IMR-90 (cell line): ENCODE measurements at regions of chr2 and their contacts with region 1.

Region 1: DNA sequence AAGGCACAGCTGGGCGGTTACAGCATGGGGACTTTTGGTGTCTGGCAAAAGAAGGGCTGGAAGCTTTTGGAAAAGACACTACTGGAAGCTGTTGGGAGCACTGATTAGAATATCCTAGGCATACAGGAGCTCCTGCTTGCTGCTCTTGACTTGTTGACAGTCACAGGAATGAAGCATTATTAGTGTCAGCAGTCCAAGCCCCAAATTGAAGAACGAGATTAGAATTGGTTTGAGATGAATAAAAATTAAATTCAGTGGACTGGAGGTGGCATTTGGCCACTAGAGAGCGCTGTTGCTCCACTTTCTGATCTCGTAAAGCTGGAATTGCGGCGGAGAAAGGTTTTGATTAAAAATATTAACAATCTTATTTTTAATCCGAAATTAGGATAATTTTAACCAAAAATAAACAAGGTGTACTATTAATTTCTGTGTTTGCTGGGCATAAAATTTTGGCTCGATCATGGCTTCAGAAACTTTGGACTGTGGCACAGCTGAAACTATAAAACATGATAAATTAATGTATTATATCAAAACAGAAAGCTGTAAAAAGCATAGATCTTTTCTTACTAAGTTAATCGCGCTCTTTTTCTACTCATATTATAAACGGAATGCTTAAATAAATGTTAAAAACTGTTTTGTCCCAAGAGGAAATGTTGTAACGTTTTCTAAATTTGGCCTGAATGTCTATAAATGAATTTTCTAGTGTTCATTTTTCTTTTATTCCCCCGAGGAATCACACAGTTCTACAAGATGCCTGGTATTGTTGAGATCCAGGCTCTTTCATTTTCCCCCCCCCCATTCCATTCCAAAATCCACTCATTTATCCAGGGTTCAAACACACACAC is 2.4 kb upstream of the HOXD8 start:
- DNase-seq: peak; percentile 58
- ATAC-seq: peak; percentile 40; the same call in 1 of the 2 replicates
- H3K4me3 ChIP-seq: no peak overlapping the region
- H3K27ac ChIP-seq: no peak overlapping the region
- H3K4me1 ChIP-seq: no peaks in the 10 kb centered on the region
- H3K27me3 ChIP-seq: peaks cover 88% of the 10 kb centered on the region
- CTCF ChIP-seq: peak; percentile 92
- POLR2A ChIP-seq: no peak
- RAD21 ChIP-seq: peak; percentile 89

Region 2: DNA sequence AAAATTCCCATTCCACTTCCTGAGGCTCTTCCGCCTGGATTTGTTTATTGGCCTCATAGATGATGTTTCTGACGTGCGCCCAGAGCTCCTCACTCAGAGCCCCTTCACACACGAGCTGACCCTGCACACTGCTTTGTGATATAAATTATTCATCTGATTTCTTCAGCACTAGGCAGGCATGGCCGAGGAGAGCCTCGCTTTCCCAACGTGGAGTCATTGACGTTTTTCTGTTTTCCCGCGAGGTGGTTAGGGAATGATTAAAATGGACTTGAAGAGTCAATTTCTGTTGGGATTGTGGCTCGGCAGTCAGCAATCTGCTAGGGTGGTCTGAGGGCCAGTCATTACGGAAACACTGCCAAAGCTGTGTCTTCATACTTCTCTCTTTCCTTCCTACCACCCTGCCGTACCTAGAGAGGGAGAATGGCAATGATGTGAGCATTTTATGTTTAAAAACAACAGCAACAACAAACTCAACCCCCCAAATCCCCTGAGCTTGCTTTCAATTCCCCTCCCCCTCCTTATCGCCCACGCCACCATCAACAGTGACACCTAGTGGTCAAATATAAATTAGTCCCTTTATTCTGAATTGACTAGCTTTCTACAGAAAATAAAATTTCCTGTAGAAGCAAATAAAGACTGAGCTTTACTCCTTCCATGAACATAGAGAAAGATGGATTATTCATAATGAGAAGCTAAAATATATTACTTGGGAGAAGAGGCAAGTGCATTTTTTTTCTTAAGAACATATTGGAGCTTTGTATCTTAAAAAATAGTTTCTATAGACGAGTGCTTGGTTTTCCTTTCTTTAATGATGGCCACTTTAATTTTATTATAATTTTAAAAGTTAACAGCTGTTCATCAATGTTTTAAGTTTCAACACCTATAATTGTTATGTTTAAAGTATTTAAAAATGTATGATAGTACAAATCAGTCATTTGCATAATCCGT is 427.2 kb after region 1 on chr2:
- CTCF ChIA-PET with region 1: interaction called, 19 read pairs
- POLR2A ChIA-PET with region 1: no interaction called
- dilution Hi-C with region 1: no loop called
- in situ Hi-C with region 1: no loop called
- intact Hi-C with region 1: loop called (anchors 1 kb)
- DNase-seq: peak; percentile 52
- ATAC-seq: peak; percentile 75
- H3K4me3 ChIP-seq: peak overlapping the region; percentile 38
- H3K27ac ChIP-seq: no peak overlapping the region
- H3K4me1 ChIP-seq: no peaks in the 10 kb centered on the region
- H3K27me3 ChIP-seq: peaks cover 16% of the 10 kb centered on the region
- CTCF ChIP-seq: peak; percentile 80
- POLR2A ChIP-seq: no peak
- RAD21 ChIP-seq: peak; percentile 62

Region 3: DNA sequence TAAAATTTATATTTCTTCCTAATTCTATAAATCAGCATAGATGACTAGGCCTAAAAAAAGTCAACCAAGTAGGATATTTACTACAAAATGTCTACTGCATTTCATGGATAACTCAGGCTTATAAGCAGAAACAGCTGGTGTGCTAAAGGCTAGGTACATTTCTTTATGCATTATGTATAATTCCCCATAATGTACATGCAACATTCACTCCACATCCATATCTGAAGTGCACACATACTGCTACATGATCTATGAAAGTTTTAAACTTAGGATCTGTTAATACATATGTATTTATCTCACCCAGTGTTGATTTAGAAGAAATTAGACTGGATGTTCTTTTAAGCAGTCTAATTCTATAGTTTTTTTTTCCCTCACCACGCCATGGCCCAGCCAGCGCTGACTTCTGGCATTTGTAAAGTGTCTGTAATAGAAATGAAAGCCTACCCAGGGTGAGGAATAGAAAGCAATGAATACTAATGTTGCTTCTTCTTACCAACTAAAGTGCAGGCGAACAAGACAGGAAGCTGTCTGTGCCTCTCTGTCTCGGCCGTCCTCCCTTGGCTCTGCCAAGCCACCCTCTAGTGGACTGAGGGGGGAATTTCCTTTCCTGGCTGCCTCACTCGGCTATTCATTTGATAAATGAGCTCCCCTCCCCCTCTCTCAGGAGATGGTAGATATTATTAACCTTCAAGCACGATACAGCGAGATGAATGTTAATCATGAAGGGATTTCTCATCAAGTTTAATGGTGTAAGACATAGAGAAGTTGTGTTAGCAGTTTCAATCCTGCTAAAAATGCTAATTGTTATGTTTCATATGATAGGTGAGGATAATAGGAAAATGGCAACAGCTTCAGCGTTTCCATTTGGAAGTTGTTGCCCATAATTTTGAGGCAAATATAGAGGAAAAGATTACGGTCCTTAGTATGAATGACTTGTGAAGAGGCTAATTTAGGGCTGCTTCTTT is 526.6 kb after region 1 on chr2:
- CTCF ChIA-PET with region 1: interaction called, 20 read pairs
- POLR2A ChIA-PET with region 1: no interaction called
- dilution Hi-C with region 1: no loop called
- in situ Hi-C with region 1: no loop called
- intact Hi-C with region 1: loop called (anchors 1 kb)
- DNase-seq: peak; percentile 55
- ATAC-seq: peak; percentile 86
- H3K4me3 ChIP-seq: no peak overlapping the region
- H3K27ac ChIP-seq: no peak overlapping the region
- H3K4me1 ChIP-seq: no peaks in the 10 kb centered on the region
- H3K27me3 ChIP-seq: no peaks in the 10 kb centered on the region; the same call in 1 of the 2 replicates
- CTCF ChIP-seq: peak; percentile 59
- POLR2A ChIP-seq: no peak
- RAD21 ChIP-seq: no peak; the same call in 1 of the 2 replicates

Region 4: DNA sequence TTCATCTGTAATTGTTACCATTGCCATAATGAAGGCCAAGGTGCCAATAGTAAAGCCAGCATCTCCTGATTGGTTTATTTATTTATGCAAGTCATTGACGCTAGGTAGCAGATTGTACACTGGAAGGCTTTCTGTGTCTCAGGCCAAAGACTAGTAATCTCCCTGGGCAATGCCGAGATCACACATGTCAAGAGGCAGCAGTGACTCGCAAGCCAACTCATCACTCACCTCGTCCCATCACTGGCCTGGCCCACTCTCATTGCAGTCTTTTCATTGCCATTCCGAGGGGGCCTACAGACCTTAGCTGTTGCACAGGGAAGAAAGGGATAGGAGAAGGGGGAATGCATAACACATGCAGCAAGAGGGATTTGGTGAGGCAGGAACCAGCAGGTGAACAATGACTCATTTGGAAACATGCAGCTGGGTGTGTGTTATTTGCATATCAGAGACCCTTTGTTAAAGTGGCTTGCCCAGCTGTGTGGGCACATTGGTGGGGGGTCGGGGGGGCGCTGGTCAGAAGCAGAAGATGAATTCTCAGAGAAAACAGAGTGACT is 636.8 kb after region 1 on chr2:
- CTCF ChIA-PET with region 1: no interaction called
- POLR2A ChIA-PET with region 1: no interaction called
- dilution Hi-C with region 1: no loop called
- in situ Hi-C with region 1: no loop called
- intact Hi-C with region 1: no loop called
- DNase-seq: no peak
- ATAC-seq: no peak
- H3K4me3 ChIP-seq: no peak overlapping the region
- H3K27ac ChIP-seq: no peak overlapping the region
- H3K4me1 ChIP-seq: no peaks in the 10 kb centered on the region
- H3K27me3 ChIP-seq: no peaks in the 10 kb centered on the region
- CTCF ChIP-seq: no peak
- POLR2A ChIP-seq: no peak
- RAD21 ChIP-seq: no peak

Region 5: GRCh38 chr2:177148477-177149154 is 1021.5 kb after region 1 on chr2:
- CTCF ChIA-PET with region 1: interaction called, 22 read pairs
- POLR2A ChIA-PET with region 1: no interaction called
- dilution Hi-C with region 1: no loop called
- in situ Hi-C with region 1: loop called (anchors 10 kb)
- intact Hi-C with region 1: loop called (anchors 1 kb)
- DNase-seq: peak; percentile 66
- ATAC-seq: peak; percentile 99
- H3K4me3 ChIP-seq: peak overlapping the region; percentile 71
- H3K27ac ChIP-seq: no peak overlapping the region
- H3K4me1 ChIP-seq: no peaks in the 10 kb centered on the region
- H3K27me3 ChIP-seq: peaks cover 19% of the 10 kb centered on the region
- CTCF ChIP-seq: peak; percentile 80
- POLR2A ChIP-seq: no peak
- RAD21 ChIP-seq: peak; percentile 43

Region 6: DNA sequence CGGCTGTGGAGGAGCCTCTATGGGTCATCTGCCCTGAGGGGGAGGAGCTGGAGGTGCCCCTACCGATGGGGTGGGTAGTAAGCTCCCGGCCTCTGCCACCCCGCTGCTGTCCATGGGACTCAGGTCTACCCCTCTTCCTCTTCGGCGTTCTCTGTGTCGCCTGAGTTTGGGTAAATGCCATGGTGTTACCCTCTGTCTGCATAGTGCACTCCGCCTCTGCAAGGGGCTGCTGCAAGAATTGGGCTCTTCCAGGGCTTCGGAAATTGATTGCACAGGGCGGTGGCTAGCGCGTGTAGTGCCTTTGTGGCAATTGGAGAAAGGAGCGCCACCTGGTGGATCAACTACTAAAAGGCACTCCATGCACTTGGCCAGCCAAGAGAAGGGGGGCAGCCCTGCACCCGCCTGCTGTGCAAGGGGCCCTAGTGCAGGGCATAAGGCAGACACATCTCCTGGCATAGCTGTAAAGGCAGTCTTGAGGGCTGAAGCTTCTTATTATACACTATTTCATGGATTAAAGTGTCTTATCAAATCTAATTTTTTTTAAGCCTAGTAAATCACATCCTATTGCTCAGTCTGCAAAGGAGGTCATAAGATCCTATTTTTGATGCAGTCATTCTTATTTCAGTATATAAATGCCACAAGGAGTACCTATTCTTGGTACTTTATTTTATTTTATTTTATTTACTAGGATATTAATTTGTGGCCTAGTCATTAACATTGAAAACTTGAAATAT is 1636.5 kb after region 1 on chr2:
- CTCF ChIA-PET with region 1: no interaction called
- POLR2A ChIA-PET with region 1: no interaction called
- dilution Hi-C with region 1: no loop called
- in situ Hi-C with region 1: no loop called
- intact Hi-C with region 1: loop called (anchors 2 kb)
- DNase-seq: peak; percentile 58
- ATAC-seq: peak; percentile 98
- H3K4me3 ChIP-seq: no peak overlapping the region
- H3K27ac ChIP-seq: no peak overlapping the region
- H3K4me1 ChIP-seq: no peaks in the 10 kb centered on the region
- H3K27me3 ChIP-seq: peaks cover 4% of the 10 kb centered on the region; the same call in 1 of the 2 replicates
- CTCF ChIP-seq: peak; percentile 71
- POLR2A ChIP-seq: no peak
- RAD21 ChIP-seq: peak; percentile 55